ENCODE measurements at regions of chr12 and their contacts with region 1.

Region 1: GRCh38 chr12:14454098-14454907 is 88.8 kb downstream of the ATF7IP start:
- DNase-seq: peak in 7 of 9 donors; percentile 5 to 33 (median 25)
- ATAC-seq: peak; percentile 86
- H3K4me3 ChIP-seq: no peak overlapping the region
- H3K4me3 Mint-ChIP-seq: peak overlapping the region in 5 of 10 donors; percentile 1 to 32 (median 3)
- H3K27ac ChIP-seq: no peak overlapping the region
- H3K27ac Mint-ChIP-seq: peak overlapping the region; percentile 9 to 83 (median 73)
- H3K4me1 ChIP-seq: peaks cover 17 to 18% of the 10 kb centered on the region in 2 donors
- H3K4me1 Mint-ChIP-seq: peaks cover 36 to 68% (median 65%) of the 10 kb centered on the region in 7 donors
- H3K27me3 ChIP-seq: no peaks in the 10 kb centered on the region
- H3K27me3 Mint-ChIP-seq: no peaks in the 10 kb centered on the region

Region 2: GRCh38 chr12:14185427-14186192 is 268.7 kb before region 1 on chr12:
- CTCF ChIA-PET with region 1: no interaction called
- POLR2A ChIA-PET with region 1: no interaction called
- intact Hi-C with region 1: loop called in 1 of 2 experiments (anchors 1 kb)
- DNase-seq: peak in 4 of 9 donors; percentile 9 to 29 (median 18)
- ATAC-seq: peak; percentile 54
- H3K4me3 ChIP-seq: no peak overlapping the region
- H3K4me3 Mint-ChIP-seq: no peak overlapping the region
- H3K27ac ChIP-seq: no peak overlapping the region
- H3K27ac Mint-ChIP-seq: no peak overlapping the region
- H3K4me1 ChIP-seq: no peaks in the 10 kb centered on the region
- H3K4me1 Mint-ChIP-seq: no peaks in the 10 kb centered on the region
- H3K27me3 ChIP-seq: no peaks in the 10 kb centered on the region
- H3K27me3 Mint-ChIP-seq: peaks cover 0 to 16% (median 7%) of the 10 kb centered on the region in 5 donors

Region 3: GRCh38 chr12:14403711-14404196 is 50.5 kb before region 1 on chr12:
- CTCF ChIA-PET with region 1: no interaction called
- POLR2A ChIA-PET with region 1: no interaction called
- intact Hi-C with region 1: no loop called
- DNase-seq: peak in 6 of 9 donors; percentile 32 to 69 (median 49)
- ATAC-seq: peak; percentile 81
- H3K4me3 ChIP-seq: peak overlapping the region; percentile 19
- H3K4me3 Mint-ChIP-seq: peak overlapping the region; percentile 7 to 68 (median 64)
- H3K27ac ChIP-seq: peak overlapping the region; percentile 39
- H3K27ac Mint-ChIP-seq: peak overlapping the region; percentile 60 to 92 (median 83)
- H3K4me1 ChIP-seq: peaks cover 55 to 60% of the 10 kb centered on the region in 2 donors
- H3K4me1 Mint-ChIP-seq: peaks cover 51 to 89% (median 77%) of the 10 kb centered on the region in 7 donors
- H3K27me3 ChIP-seq: no peaks in the 10 kb centered on the region
- H3K27me3 Mint-ChIP-seq: no peaks in the 10 kb centered on the region

Region 4: GRCh38 chr12:14443531-14443930 is 10.8 kb before region 1 on chr12:
- CTCF ChIA-PET with region 1: interaction called, 3 read pairs
- POLR2A ChIA-PET with region 1: no interaction called
- intact Hi-C with region 1: loop called in 1 of 2 experiments (anchors 2 kb)
- DNase-seq: no peak
- ATAC-seq: no peak
- H3K4me3 ChIP-seq: no peak overlapping the region
- H3K4me3 Mint-ChIP-seq: no peak overlapping the region
- H3K27ac ChIP-seq: no peak overlapping the region
- H3K27ac Mint-ChIP-seq: peak overlapping the region in 5 of 9 donors; percentile 11 to 85 (median 51)
- H3K4me1 ChIP-seq: no peaks in the 10 kb centered on the region
- H3K4me1 Mint-ChIP-seq: peaks cover 17 to 51% (median 42%) of the 10 kb centered on the region in 7 donors
- H3K27me3 ChIP-seq: no peaks in the 10 kb centered on the region
- H3K27me3 Mint-ChIP-seq: no peaks in the 10 kb centered on the region

Region 5: GRCh38 chr12:14473707-14474287 is 19.5 kb after region 1 on chr12:
- CTCF ChIA-PET with region 1: interaction called, 3 read pairs
- POLR2A ChIA-PET with region 1: interaction called, 4 read pairs
- intact Hi-C with region 1: loop called in 1 of 2 experiments (anchors 2 kb)
- DNase-seq: peak in 5 of 9 donors; percentile 11 to 36 (median 24)
- ATAC-seq: no peak
- H3K4me3 ChIP-seq: no peak overlapping the region
- H3K4me3 Mint-ChIP-seq: peak overlapping the region in 1 of 10 donors; percentile 18
- H3K27ac ChIP-seq: no peak overlapping the region
- H3K27ac Mint-ChIP-seq: peak overlapping the region in 2 of 9 donors; percentile 21 to 62
- H3K4me1 ChIP-seq: peaks cover 0 to under 1% of the 10 kb centered on the region in 2 donors
- H3K4me1 Mint-ChIP-seq: peaks cover 0 to 7% (median 5%) of the 10 kb centered on the region in 7 donors
- H3K27me3 ChIP-seq: no peaks in the 10 kb centered on the region
- H3K27me3 Mint-ChIP-seq: no peaks in the 10 kb centered on the region

Region 6: DNA sequence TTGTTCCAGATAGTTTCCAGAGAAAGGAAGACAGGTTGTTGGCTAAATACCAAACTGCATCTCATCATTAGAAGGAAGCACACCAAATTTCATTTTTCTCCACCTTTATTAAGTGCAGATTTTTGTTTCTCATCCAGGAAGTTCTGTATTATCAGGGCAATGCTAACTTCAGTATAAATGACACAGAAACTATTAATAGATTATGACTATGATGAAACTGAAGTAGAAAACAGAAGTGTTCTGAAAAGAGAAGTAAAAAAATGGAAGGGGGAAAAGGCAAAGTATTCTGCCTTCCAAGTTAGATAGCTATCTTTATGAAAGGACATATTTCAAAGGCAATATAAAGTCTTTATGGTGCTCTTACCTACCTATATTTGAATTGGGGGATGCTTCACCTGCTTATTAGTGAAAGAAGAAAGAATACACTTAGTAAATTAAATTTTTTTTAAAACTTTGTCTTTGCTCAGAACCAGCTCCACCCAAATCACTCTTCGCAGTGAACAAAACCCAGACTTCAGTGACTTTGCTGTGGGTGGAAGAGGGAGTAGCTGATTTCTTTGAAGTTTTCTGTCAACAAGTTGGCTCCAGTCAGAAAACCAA is 1091.9 kb after region 1 on chr12:
- CTCF ChIA-PET with region 1: no interaction called
- POLR2A ChIA-PET with region 1: no interaction called
- intact Hi-C with region 1: no loop called
- DNase-seq: peak in 7 of 9 donors; percentile 73 to 89 (median 85)
- ATAC-seq: peak; percentile 93
- H3K4me3 ChIP-seq: no peak overlapping the region
- H3K4me3 Mint-ChIP-seq: peak overlapping the region; percentile 36 to 85 (median 76)
- H3K27ac ChIP-seq: peak overlapping the region; percentile 74
- H3K27ac Mint-ChIP-seq: peak overlapping the region; percentile 95 to 100 (median 98)
- H3K4me1 ChIP-seq: peaks cover 0 to 50% of the 10 kb centered on the region in 2 donors
- H3K4me1 Mint-ChIP-seq: peaks cover 30 to 98% (median 86%) of the 10 kb centered on the region in 7 donors
- H3K27me3 ChIP-seq: peaks cover 0 to under 1% of the 10 kb centered on the region in 2 donors
- H3K27me3 Mint-ChIP-seq: no peaks in the 10 kb centered on the region

Measured in naive thymus-derived CD4-positive, alpha-beta T cell (primary cell).